Astrocyte of the cerebellum (primary cell): ENCODE measurements at regions of chr12 and their contacts with region 1.

Region 1: GRCh38 chr12:106380954-106381353 is 23.4 kb downstream of the POLR3B start:
- DNase-seq: no peak
- H3K4me3 ChIP-seq: no peak overlapping the region
- CTCF ChIP-seq: no peak

Region 2: GRCh38 chr12:106919910-106920544 is 539.1 kb after region 1 on chr12:
- in situ Hi-C with region 1: loop called (anchors 5 kb)
- DNase-seq: peak; percentile 49
- H3K4me3 ChIP-seq: no peak overlapping the region
- CTCF ChIP-seq: peak; percentile 62